Stomach (tissue), 19 donors: ENCODE measurements at regions of chr10 and their contacts with region 1.

Region 1: DNA sequence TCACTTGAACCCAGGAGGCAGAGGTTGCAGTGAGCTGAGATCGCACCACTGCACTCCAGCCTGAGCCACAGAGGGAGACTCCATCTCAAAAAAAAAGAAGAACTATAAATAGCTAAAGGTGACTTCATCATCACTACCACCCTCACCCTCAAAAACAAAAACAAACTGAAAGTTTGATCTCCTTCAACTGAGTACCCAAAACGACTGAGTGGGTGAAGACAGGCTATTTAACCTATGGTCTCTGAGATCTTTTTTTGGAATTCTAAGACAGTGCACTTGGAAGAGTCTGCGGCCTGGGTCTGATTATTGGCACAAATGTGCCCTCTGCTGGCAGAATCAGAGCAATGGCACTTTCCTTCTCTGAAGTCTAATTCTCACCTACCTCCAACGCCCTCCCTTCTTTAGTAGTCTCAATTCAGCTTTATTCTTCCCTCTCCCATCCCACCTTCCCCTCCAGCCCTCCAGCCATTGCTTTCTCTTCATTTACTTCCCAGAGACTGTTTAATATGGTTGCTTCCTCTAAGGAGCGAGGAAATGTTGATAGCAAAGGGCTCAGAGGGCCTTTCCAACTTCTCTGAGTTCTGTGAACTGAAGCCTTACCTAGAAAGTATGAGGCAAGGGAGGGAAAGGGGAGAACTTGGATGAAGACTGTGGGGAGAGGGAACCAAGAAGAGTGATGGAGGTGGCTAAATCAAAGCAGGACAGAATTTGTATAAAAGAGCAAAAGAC is 2.9 kb upstream of the MYOZ1 start:
- DNase-seq: peak; percentile 68 to 86
- H3K4me3 ChIP-seq: no peak overlapping the region
- H3K27ac ChIP-seq: no peak overlapping the region
- H3K4me1 ChIP-seq: peaks cover 7 to 41% (median 26%) of the 10 kb centered on the region in 4 donors
- H3K27me3 ChIP-seq: no peaks in the 10 kb centered on the region
- CTCF ChIP-seq: peak in 5 of 7 experiments; percentile 72 to 96 (median 86)
- EP300 ChIP-seq: no peak
- POLR2A ChIP-seq: no peak

Region 2: GRCh38 chr10:73529089-73529832 is 114.9 kb before region 1 on chr10:
- intact Hi-C with region 1: loop called (anchors 2 kb)
- DNase-seq: peak; percentile 40 to 86
- H3K4me3 ChIP-seq: no peak overlapping the region
- H3K27ac ChIP-seq: peak overlapping the region in 1 of 5 donors; percentile 53
- H3K4me1 ChIP-seq: peaks cover 0 to 24% (median 5%) of the 10 kb centered on the region in 4 donors
- H3K27me3 ChIP-seq: no peaks in the 10 kb centered on the region
- CTCF ChIP-seq: peak in 5 of 7 experiments; percentile 75 to 86 (median 84)
- EP300 ChIP-seq: no peak
- POLR2A ChIP-seq: no peak

Region 3: GRCh38 chr10:74081192-74081803 is 437.1 kb after region 1 on chr10:
- intact Hi-C with region 1: no loop called
- DNase-seq: peak; percentile 43 to 81
- H3K4me3 ChIP-seq: no peak overlapping the region
- H3K27ac ChIP-seq: no peak overlapping the region
- H3K4me1 ChIP-seq: peaks cover 0 to 71% (median 27%) of the 10 kb centered on the region in 4 donors
- H3K27me3 ChIP-seq: no peaks in the 10 kb centered on the region
- CTCF ChIP-seq: peak in 5 of 7 experiments; percentile 54 to 68 (median 64)
- EP300 ChIP-seq: no peak
- POLR2A ChIP-seq: no peak

Region 4: DNA sequence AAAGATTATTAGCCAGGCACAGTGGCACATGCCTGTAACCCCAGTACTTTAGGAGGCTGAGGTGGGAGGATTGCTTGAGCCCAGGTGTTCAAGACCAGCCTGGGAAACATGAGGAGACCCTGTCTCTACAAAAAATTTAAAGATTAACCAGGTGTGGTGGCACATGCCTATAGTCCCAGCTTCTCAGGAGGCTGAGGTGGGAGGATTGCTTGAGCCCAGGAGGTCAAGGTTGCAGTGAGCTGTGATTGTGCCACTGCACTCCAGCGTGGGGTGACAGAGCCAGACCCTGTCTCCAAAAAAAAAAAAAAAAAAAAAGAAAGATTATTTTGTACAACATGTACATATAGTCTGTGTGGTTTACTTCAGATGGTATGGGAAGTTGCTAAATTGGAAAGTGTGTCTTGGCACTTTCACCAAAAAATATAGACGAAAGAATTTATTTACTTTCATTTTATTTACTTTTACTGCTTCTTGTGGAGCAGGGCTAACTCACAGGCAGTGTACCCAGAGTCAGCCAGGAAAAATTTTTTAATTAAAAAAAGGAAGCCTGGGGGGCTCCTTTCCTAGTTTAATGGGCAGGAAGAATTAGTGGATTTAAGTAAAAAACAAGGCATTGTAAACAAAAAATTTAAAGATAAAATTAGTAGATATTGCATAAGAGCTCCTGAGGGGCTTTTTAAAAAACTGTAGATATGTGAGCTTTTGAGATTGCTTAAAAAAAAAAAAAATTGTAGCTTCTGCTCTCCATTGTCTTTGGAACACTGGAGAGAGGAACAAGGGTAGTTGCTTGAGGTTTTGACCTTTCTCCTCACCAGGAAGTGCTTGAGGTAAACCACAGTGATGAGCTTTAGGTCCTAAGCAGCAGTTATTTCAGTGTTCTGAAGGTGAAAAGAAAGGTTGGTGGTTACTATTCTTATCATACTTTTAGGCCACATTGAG is 1521.8 kb after region 1 on chr10:
- intact Hi-C with region 1: no loop called
- DNase-seq: peak in 1 of 2 donors; percentile 32
- H3K4me3 ChIP-seq: no peak overlapping the region
- H3K27ac ChIP-seq: peak overlapping the region in 1 of 5 donors; percentile 11
- H3K4me1 ChIP-seq: peaks cover 0 to 23% (median 14%) of the 10 kb centered on the region in 4 donors
- H3K27me3 ChIP-seq: no peaks in the 10 kb centered on the region
- CTCF ChIP-seq: no peak
- EP300 ChIP-seq: no peak
- POLR2A ChIP-seq: no peak